Activated T-helper 2 cell treated with anti-CD3 and anti-CD28 coated beads, Interferon-gamma antibody, Interleukin-2, Interleukin-4, amounts not matched to agents 10 μg/mL and 5 μg/mL and 100 μg/mL, durations not matched to agents 14 hours and 24 hours and 36 hours (primary cell): ENCODE measurements at regions of chr2 and their contacts with region 1.

Region 1: DNA sequence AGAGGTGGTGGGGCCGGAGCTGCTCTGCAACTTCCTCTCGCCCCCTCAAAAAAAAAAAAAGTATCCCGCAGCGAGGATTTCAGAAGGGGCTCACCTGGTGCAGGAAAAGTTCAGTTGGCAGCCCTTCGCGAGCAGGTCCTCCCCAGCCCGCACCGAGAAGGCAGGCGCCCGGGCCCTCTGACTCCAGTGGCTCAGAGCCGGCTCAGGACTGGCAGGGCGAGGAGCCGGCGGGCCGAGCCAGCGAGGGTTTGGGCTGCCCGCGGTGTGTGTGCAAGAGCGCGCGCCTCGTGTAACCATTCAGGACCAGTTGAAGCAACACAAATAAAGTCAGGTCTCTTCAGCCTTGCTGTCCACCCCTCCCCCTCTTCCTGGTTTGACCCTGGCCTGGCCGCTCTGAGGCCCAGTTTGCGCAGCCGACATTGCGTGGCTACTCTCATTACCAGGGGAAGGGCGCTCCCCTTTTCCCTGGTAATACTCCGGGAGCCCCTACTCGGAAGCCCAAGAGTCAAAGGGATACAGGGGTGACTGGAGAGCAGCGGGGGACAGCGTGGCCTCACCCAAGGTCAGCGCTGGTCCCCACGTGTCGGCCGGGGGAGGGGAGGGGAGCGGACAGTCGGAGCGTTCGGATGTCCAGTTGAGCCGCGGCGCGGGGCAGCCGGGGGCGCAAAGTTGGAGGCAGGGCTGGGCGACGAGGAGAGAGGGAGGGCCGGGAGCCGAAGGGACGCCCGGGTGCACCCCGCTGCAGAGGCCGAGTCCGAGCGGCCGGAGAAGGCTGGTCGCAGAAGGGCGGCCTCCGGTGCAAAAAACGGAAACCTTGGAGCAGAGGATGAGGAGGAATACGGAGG is 12.3 kb downstream of the EN1 start:
- DNase-seq: no peak
- H3K4me3 Mint-ChIP-seq: no peak overlapping the region
- H3K27ac Mint-ChIP-seq: no peak overlapping the region
- H3K4me1 Mint-ChIP-seq: no peaks in the 10 kb centered on the region
- H3K27me3 Mint-ChIP-seq: peaks cover 83% of the 10 kb centered on the region

Region 2: DNA sequence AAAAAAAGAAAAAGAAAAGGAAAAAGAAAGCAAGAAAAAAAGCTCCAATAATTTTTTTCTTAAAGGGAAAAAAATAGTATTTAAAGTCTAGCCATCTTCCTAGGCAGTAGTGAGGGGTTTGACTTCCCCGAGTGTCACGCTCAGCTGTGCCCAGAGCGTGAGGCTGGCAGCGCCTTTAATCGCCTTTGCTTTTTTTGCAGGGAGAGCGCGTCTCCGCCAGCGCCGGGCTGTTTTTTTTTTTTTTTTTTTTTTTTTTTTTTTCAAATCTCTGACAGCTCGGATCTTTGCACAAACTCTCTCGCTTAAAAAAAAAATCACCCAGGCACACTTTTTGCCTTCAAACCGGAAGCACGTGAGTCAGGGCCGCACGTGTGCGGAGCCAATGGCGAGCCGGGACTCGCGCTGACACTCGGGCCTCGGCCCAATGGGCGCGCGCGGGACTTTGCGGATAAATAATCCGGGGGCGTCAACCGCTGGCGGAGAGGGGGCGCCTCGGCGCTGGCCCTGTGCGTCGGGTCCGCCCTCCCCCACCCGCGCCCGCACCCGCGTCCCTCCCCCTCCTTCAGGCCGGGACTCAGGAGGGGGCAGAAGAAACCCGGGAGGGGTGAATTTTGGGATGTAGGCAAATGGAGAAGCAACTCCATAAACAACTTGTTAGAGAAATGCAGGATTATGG is 12.5 kb after region 1 on chr2 and contains the start of gene EN1:
- intact Hi-C with region 1: loop called (anchors 2 kb)
- DNase-seq: no peak
- H3K4me3 Mint-ChIP-seq: no peak within 1 kb of the TSS
- H3K27ac Mint-ChIP-seq: peak within 1 kb of the TSS; percentile 62
- H3K4me1 Mint-ChIP-seq: peaks cover 4% of the 10 kb centered on the region
- H3K27me3 Mint-ChIP-seq: peaks cover 80% of the 10 kb centered on the region
- total RNA-seq, gene EN1: not detected in 2 replicates